K562 (cell line): ENCODE measurements at regions of chr5 and their contacts with region 1.

Region 1: GRCh38 chr5:133944263-133945185 is 23.9 kb downstream of the C5orf15 start:
- DNase-seq: peak; percentile 79 to 83 (median 79)
- ATAC-seq: peak; percentile 85
- H3K4me3 ChIP-seq: no peak overlapping the region
- H3K27ac ChIP-seq: no peak overlapping the region
- H3K4me1 ChIP-seq: peaks cover 18 to 23% of the 10 kb centered on the region in 2 experiments; a peak in 4 of 5 replicates
- H3K27me3 ChIP-seq: no peaks in the 10 kb centered on the region
- CTCF ChIP-seq: peak; percentile 81 to 94 (median 93)
- EP300 ChIP-seq: no peak
- POLR2A ChIP-seq: no peak
- RAD21 ChIP-seq: peak; percentile 94 to 97

Region 2: GRCh38 chr5:133489632-133490031 is 454.9 kb before region 1 on chr5:
- CTCF ChIA-PET with region 1: no interaction called
- POLR2A ChIA-PET with region 1: no interaction called
- in situ Hi-C with region 1: no loop called
- intact Hi-C with region 1: loop called (anchors 10 kb)
- DNase-seq: peak in 2 of 4 experiments; percentile 14 to 15
- ATAC-seq: peak; percentile 74
- H3K4me3 ChIP-seq: no peak overlapping the region
- H3K27ac ChIP-seq: no peak overlapping the region
- H3K4me1 ChIP-seq: no peaks in the 10 kb centered on the region
- H3K27me3 ChIP-seq: peaks cover 18 to 34% of the 10 kb centered on the region in 2 experiments; a peak in 4 of 5 replicates
- CTCF ChIP-seq: peak; percentile 37 to 52 (median 42); a peak in 5 of 6 replicates
- EP300 ChIP-seq: no peak
- POLR2A ChIP-seq: no peak
- RAD21 ChIP-seq: peak in 1 of 2 experiments; percentile 55; a peak in 2 of 4 replicates

Region 3: GRCh38 chr5:133735327-133735726 is 209.2 kb before region 1 on chr5:
- CTCF ChIA-PET with region 1: no interaction called
- POLR2A ChIA-PET with region 1: no interaction called
- in situ Hi-C with region 1: no loop called
- intact Hi-C with region 1: loop called (anchors 5 kb)
- DNase-seq: no peak
- ATAC-seq: no peak
- H3K4me3 ChIP-seq: no peak overlapping the region
- H3K27ac ChIP-seq: no peak overlapping the region
- H3K4me1 ChIP-seq: no peaks in the 10 kb centered on the region
- H3K27me3 ChIP-seq: peaks cover 3 to 16% of the 10 kb centered on the region in 2 experiments; a peak in 1 of 5 replicates
- CTCF ChIP-seq: no peak
- EP300 ChIP-seq: no peak
- POLR2A ChIP-seq: no peak
- RAD21 ChIP-seq: no peak

Region 4: GRCh38 chr5:133763744-133764143 is 180.8 kb before region 1 on chr5:
- CTCF ChIA-PET with region 1: no interaction called
- POLR2A ChIA-PET with region 1: no interaction called
- in situ Hi-C with region 1: loop called (anchors 5 kb)
- intact Hi-C with region 1: no loop called
- DNase-seq: no peak
- ATAC-seq: no peak
- H3K4me3 ChIP-seq: no peak overlapping the region
- H3K27ac ChIP-seq: no peak overlapping the region
- H3K4me1 ChIP-seq: no peaks in the 10 kb centered on the region
- H3K27me3 ChIP-seq: peaks cover 0 to 27% of the 10 kb centered on the region in 2 experiments; a peak in 2 of 5 replicates
- CTCF ChIP-seq: no peak
- EP300 ChIP-seq: no peak
- POLR2A ChIP-seq: no peak
- RAD21 ChIP-seq: no peak

Region 5: DNA sequence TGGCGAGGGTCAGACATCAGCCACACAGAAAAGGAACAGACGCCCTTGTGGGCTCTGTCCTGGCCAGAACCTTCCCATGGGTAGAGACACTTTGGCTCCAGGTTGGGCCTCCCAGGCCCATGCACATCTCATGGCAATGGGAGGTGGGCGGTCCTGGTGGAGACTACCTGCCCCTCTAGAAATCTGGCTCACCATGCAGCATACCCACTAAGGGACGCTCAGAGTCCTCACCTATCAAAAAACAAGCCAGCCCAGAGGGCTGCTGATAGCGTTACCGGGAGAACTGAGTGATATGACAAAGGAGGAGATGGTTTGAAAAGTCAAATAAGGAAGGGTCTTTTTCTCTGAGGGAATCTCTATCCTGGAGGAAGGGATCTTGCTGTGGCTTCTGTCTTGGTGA is 38.2 kb before region 1 on chr5:
- CTCF ChIA-PET with region 1: interaction called, 4 read pairs
- POLR2A ChIA-PET with region 1: no interaction called
- in situ Hi-C with region 1: no loop called
- intact Hi-C with region 1: loop called (anchors 1 kb)
- DNase-seq: peak; percentile 33 to 39 (median 36)
- ATAC-seq: peak; percentile 36
- H3K4me3 ChIP-seq: no peak overlapping the region
- H3K27ac ChIP-seq: no peak overlapping the region
- H3K4me1 ChIP-seq: peaks cover 35 to 49% of the 10 kb centered on the region in 2 experiments; a peak in 4 of 5 replicates
- H3K27me3 ChIP-seq: no peaks in the 10 kb centered on the region
- CTCF ChIP-seq: peak; percentile 18 to 57 (median 37); a peak in 3 of 6 replicates
- EP300 ChIP-seq: no peak
- POLR2A ChIP-seq: no peak
- RAD21 ChIP-seq: peak; percentile 63 to 64

Region 6: GRCh38 chr5:135934939-135935338 is 1990.4 kb after region 1 on chr5:
- CTCF ChIA-PET with region 1: no interaction called
- POLR2A ChIA-PET with region 1: no interaction called
- in situ Hi-C with region 1: no loop called
- intact Hi-C with region 1: no loop called
- DNase-seq: no peak
- ATAC-seq: no peak
- H3K4me3 ChIP-seq: no peak overlapping the region
- H3K27ac ChIP-seq: no peak overlapping the region
- H3K4me1 ChIP-seq: peaks cover 0 to 5% of the 10 kb centered on the region in 2 experiments; a peak in 1 of 5 replicates
- H3K27me3 ChIP-seq: peaks cover 8 to 11% of the 10 kb centered on the region in 2 experiments; a peak in 3 of 5 replicates
- CTCF ChIP-seq: no peak
- EP300 ChIP-seq: no peak
- POLR2A ChIP-seq: no peak
- RAD21 ChIP-seq: no peak